ENCODE measurements at regions of chr20 and their contacts with region 1.

Region 1: DNA sequence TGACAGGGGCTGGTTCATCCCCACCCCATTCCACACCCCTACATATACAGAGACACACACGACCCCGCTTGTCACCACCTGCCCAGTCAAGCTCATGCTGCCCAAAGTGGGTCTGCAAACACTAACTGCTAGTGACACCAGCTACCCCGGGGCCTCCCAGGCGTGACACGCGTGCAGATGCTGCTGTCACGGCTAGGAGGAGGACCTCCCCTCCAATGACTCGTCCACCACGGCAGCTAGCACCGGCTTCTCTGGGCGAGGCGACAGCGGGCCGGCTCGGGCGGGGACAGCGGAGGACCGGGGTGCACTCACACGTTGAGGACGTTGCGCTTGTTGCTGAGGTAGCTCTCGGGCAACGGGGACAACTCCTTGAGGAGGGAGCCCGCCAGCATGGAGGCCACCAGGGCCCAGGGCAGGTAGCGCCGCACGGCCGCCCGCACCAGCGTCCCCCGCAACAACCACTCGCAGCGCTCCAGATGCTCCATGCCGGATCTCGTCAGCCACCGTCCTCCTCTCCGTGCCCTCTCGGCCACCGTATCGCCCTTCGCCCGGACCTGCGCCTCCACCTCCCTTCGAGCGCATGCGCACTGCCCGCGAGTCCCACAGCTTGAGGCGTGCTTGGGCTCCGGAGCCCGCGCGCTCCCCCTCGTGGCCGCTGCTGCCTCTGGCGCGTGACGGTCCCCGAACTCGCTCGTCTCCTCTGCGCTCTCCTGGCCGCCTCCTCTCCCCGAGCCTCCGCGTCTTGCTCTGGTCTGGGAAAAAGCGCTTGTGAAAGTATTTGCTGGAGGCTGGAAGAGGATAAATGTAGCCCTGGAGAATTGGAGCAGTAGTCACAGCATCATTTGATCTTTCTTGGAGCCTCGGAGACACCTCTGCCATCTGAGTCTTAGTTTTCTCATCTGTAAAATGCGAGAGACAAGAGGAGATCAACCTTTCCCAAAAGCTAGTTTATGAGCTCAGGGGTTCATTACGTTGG is at the start of gene FITM2:
- DNase-seq: peak; percentile 95 to 97 (median 96)
- H3K4me3 ChIP-seq: peak within 1 kb of the TSS; percentile 62 to 90 (median 80)
- H3K27ac ChIP-seq: peak within 1 kb of the TSS in 1 of 2 experiments; percentile 19
- H3K4me1 ChIP-seq: peaks cover 0 to 14% (median 13%) of the 10 kb centered on the region in 4 experiments
- H3K27me3 ChIP-seq: no peaks in the 10 kb centered on the region

Region 2: GRCh38 chr20:44326391-44327159 is 15.6 kb after region 1 on chr20:
- CTCF ChIA-PET with region 1: interaction called, 27 read pairs
- POLR2A ChIA-PET with region 1: no interaction called
- DNase-seq: peak in 2 of 3 donors; percentile 13 to 29
- H3K4me3 ChIP-seq: peak overlapping the region in 3 of 7 experiments; percentile 28 to 36 (median 33)
- H3K27ac ChIP-seq: no peak overlapping the region
- H3K4me1 ChIP-seq: peaks cover 0 to 4% (median 2%) of the 10 kb centered on the region in 4 experiments
- H3K27me3 ChIP-seq: peaks cover 0 to 20% (median 7%) of the 10 kb centered on the region in 5 experiments

Region 3: DNA sequence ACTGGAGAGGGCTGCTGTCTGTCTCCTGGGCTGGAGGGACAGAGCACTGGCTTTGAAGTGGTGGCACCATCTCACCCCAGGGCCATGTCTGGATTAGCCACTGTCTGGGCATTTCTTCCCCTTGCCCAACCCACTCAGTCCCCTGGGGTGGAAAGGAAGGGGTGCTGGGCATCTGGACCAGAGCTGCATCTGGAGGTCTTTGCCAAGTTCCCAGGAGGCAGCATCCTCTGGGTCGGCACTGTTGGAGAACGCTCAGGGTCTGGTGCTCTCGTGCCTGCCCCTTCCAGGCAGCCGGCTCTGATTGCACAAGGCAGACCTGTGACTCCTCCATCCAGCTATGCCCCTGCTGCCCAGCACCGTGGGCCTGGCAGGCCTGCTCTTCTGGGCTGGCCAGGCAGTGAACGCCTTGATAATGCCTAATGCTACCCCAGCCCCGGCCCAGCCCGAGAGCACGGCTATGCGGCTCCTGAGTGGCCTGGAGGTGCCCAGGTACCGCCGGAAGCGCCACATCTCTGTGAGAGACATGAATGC is 25.9 kb after region 1 on chr20 and contains the start of gene R3HDML:
- CTCF ChIA-PET with region 1: no interaction called
- POLR2A ChIA-PET with region 1: no interaction called
- DNase-seq: no peak
- H3K4me3 ChIP-seq: no peak within 1 kb of the TSS
- H3K27ac ChIP-seq: no peak within 1 kb of the TSS
- H3K4me1 ChIP-seq: no peaks in the 10 kb centered on the region
- H3K27me3 ChIP-seq: peaks cover 0 to 24% (median 16%) of the 10 kb centered on the region in 5 experiments

Region 4: GRCh38 chr20:44762466-44763140 is 451.7 kb after region 1 on chr20:
- CTCF ChIA-PET with region 1: no interaction called
- POLR2A ChIA-PET with region 1: no interaction called
- DNase-seq: no peak
- H3K4me3 ChIP-seq: no peak overlapping the region
- H3K27ac ChIP-seq: no peak overlapping the region
- H3K4me1 ChIP-seq: peaks cover 0 to 8% (median 2%) of the 10 kb centered on the region in 4 experiments
- H3K27me3 ChIP-seq: peaks cover 0 to 18% (median 10%) of the 10 kb centered on the region in 5 experiments